ENCODE measurements at regions of chr16 and their contacts with region 1.

Region 1: GRCh38 chr16:84116720-84117493 is at the start of gene MBTPS1:
- DNase-seq: peak; percentile 99
- H3K4me3 Mint-ChIP-seq: peak within 1 kb of the TSS; percentile 88
- H3K27ac Mint-ChIP-seq: peak within 1 kb of the TSS; percentile 94
- H3K4me1 Mint-ChIP-seq: peaks cover 16% of the 10 kb centered on the region
- H3K27me3 Mint-ChIP-seq: no peaks in the 10 kb centered on the region
- total RNA-seq, gene MBTPS1: 49.6 and 52.3 TPM in 2 replicates

Region 2: DNA sequence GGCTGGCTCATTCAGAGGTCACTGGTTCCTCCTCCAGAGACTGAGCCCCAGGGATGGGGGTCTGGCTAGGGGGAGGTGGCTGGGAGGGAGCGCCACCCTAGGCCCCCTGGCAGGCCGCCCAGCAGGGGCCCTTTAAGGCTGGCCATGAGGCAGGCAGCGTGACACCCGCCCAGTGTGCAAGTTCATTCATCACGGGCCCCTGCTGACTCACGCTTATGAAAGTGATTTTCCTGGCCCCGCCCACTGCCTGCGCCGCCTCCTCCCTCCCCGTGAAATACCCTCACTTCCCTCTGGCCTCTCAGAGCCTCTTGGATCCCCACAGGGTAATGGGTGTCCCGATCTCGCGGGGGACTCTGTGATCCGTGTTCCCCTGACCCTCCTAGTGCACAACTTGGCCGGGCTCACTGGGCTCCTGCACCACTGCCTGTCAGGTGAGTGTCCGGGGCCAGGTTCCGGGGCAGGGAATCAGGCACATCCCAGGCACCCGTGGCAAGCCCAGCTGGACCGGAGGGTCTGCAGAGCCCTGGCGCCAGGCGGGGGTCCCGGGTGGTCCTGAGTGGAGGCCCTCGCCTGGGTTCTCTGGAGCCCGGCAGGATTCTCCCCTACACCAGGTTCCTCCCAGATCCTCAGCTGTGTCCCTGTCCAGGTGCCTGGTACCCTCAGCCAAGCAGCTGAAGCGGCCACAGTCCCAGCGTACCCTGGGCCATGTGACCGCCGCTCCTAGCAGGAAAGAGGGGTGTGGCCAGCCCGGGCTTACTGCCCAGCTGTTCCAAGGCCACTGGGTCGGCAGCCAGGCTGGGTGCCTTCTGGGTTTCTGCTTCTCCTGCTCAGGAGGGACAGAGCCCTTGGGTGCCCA is 163.7 kb before region 1 on chr16 and contains the start of gene OSGIN1:
- intact Hi-C with region 1: loop called (anchors 1 kb)
- DNase-seq: peak; percentile 91
- H3K4me3 Mint-ChIP-seq: peak within 1 kb of the TSS; percentile 82
- H3K27ac Mint-ChIP-seq: peak within 1 kb of the TSS; percentile 72
- H3K4me1 Mint-ChIP-seq: peaks cover 14% of the 10 kb centered on the region
- H3K27me3 Mint-ChIP-seq: peaks cover 8% of the 10 kb centered on the region
- total RNA-seq, gene OSGIN1: 0.72 and 1.3 TPM in 2 replicates

Region 3: GRCh38 chr16:84084570-84085270 is 32.2 kb before region 1 on chr16:
- intact Hi-C with region 1: loop called (anchors 2 kb)
- DNase-seq: peak; percentile 91
- H3K4me3 Mint-ChIP-seq: no peak overlapping the region
- H3K27ac Mint-ChIP-seq: peak overlapping the region; percentile 1
- H3K4me1 Mint-ChIP-seq: peaks cover 30% of the 10 kb centered on the region
- H3K27me3 Mint-ChIP-seq: no peaks in the 10 kb centered on the region

Region 4: DNA sequence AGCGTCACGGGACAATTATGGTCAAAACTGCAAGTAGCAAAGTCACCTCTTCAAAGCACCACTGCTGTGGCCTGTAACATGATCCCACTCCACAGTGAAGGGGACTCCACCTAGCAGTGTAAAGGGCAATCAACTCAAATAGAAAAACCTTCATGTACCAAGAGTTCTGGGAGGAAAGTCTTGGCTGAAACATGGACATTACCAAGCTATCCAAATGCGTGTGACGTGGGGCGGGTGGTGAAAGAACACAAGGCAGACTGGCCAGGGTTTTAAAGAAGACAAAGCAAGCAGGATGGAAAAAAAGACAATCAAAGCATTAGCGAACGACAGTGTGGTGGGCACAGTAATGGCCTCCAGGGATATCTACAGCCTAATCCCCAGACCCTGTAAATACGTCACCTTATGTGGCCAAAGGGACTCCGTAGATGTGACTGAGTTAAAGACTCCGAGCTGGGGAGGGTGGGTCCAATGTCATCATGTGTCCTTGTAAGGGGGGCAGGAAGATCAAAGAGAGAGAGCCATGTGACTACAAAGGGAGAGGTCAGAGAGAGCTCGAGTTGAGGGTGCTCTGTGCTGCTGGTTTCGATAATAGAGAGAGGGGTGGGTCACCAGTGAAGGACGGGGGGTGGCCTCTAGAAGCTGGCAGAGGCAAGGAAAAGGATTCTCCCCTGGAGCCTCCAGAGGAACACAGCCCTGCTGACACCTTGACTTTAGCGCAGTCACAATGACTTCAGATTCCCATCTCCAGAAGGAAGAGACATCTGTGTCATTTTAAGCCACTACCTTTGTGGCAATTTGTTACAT is 22.1 kb after region 1 on chr16:
- intact Hi-C with region 1: loop called (anchors 1 kb)
- DNase-seq: peak; percentile 74
- H3K4me3 Mint-ChIP-seq: peak overlapping the region; percentile 48
- H3K27ac Mint-ChIP-seq: peak overlapping the region; percentile 82
- H3K4me1 Mint-ChIP-seq: peaks cover 29% of the 10 kb centered on the region
- H3K27me3 Mint-ChIP-seq: peaks cover 6% of the 10 kb centered on the region

Region 5: DNA sequence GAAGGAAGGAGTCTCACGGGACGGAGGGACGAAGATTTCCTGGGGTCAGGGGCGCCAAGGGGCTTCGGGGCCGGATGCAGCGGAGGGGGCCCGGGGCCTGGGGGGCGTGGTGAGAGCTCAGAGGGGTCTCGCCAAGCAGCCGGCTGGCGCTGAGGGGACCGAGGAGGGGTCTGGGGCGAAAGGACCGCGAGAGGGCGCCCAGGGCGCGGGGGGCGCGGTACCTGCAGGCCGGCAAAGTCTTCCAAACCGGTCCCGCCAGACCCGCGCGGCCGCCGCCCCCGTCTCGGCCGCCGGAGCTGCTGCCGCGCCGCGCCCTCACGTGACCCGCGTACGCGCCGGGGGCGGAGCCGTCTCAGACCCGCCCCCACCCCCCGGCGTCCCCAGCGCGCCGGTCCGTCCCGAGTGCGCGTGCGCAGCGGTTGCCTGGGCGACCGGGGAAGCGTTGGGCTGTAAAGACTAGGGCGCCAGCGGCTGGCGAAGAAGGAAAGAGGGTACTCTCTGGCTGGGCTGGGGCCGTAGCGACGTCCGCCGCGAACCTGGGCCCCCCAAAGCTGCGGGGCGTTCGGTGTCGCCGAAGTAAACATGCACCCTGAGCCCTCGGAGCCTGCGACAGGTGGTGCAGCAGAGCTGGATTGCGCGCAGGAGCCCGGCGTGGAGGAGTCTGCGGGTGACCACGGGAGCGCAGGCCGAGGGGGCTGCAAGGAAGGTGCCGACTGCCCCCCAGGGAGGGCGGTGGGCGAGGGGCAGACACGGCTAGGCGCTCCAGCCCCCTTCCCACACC is 28.1 kb after region 1 on chr16 and contains the starts of genes DNAAF1 and HSDL1:
- intact Hi-C with region 1: loop called (anchors 1 kb)
- DNase-seq: peak; percentile 99
- H3K4me3 Mint-ChIP-seq: peak within 1 kb of the TSS; percentile 94
- H3K27ac Mint-ChIP-seq: peak within 1 kb of the TSS; percentile 86
- H3K4me1 Mint-ChIP-seq: peaks cover 11% of the 10 kb centered on the region
- H3K27me3 Mint-ChIP-seq: peaks cover 16% of the 10 kb centered on the region
- total RNA-seq, gene DNAAF1: not detected in 2 replicates
- total RNA-seq, gene HSDL1: 16.4 and 17.6 TPM in 2 replicates

Region 6: GRCh38 chr16:84186685-84187437 is 70.0 kb after region 1 on chr16 and contains the start of gene TAF1C:
- intact Hi-C with region 1: loop called (anchors 1 kb)
- DNase-seq: peak; percentile 97
- H3K4me3 Mint-ChIP-seq: peak within 1 kb of the TSS; percentile 94
- H3K27ac Mint-ChIP-seq: peak within 1 kb of the TSS; percentile 95
- H3K4me1 Mint-ChIP-seq: peaks cover 18% of the 10 kb centered on the region
- H3K27me3 Mint-ChIP-seq: no peaks in the 10 kb centered on the region
- total RNA-seq, gene TAF1C: 60.3 and 61.1 TPM in 2 replicates

Region 7: DNA sequence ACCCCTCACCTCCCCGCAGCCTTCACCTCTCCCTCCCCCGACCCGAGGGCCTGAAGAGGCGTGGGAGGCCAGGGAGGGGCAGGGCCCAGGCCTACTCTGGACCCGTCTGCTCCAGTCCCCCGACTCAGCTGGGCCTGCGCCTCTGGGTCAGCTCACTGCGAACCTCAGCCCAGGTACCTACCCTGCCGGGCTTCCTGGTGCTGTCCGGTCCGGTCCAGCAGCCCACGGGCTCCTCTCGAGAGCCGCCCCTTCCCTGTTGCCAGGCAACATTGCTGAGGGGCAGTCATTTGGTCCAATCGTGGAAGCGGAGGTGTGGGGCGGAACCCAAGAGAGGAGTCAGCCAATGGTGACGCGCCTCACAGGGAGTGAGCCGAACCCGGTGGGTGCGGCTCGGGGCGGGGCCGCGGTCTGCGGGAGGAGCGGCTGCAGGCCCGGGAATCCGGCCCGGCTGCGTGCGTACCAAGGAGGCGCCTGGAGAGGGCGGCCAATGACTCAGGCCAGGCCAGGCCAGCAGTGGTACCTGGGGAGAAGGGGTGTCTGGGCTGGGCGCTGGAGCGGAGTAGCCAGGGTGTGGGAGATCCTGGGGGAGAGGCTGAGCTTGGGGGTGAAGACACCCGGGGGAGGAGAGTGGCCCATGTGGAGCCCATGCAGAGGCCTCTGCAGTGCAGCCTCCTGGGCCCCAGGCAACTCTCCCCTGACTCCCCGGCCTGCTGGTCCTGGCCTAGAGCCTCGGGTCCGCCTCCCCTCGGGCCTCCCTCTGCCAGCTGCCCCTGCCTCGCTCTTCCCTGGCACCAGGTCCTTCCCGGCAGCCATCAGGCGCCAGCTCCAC is 387.7 kb after region 1 on chr16 and contains the start of gene MEAK7:
- intact Hi-C with region 1: loop called (anchors 10 kb)
- DNase-seq: peak; percentile 100
- H3K4me3 Mint-ChIP-seq: peak within 1 kb of the TSS; percentile 83
- H3K27ac Mint-ChIP-seq: peak within 1 kb of the TSS; percentile 87
- H3K4me1 Mint-ChIP-seq: peaks cover 41% of the 10 kb centered on the region
- H3K27me3 Mint-ChIP-seq: no peaks in the 10 kb centered on the region
- total RNA-seq, gene MEAK7: 11.7 and 12.5 TPM in 2 replicates